Sigmoid colon (tissue), 7 donors: ENCODE measurements at regions of chr3 and their contacts with region 1.

Region 1: DNA sequence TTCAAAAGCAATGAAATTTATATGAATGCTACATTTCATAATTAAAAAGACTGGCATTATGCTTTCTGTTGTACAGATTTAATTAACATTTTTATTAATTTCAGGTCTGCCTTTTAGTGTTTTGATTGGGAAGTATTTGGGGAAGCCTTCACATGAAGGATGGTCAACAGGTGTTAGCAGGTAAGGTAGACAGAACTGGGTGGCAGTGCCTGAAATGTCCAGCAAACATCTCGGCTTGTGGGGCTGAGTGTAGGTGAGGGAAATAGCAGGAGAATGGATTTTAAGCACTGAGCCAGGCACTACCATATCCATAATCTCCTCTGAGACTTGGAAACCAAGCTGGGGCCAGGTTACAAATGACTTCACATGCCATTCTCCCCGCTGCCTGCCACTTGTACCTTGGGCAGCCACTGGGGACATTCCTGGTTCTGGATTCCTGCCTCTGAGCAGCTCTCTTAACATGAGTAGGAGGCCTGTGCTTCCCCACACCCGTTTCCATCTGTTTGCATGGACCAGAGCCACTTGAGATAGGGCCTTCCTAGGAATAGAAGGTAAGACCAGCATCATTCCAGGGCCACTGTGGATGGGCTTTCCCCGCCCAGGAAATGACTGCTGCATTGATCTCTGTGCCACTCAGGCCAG is 125.9 kb upstream of the HES1 start:
- DNase-seq: no peak
- H3K4me3 ChIP-seq: no peak overlapping the region
- H3K27ac ChIP-seq: no peak overlapping the region
- H3K4me1 ChIP-seq: no peaks in the 10 kb centered on the region
- H3K27me3 ChIP-seq: no peaks in the 10 kb centered on the region
- CTCF ChIP-seq: no peak
- EP300 ChIP-seq: no peak
- POLR2A ChIP-seq: no peak

Region 2: DNA sequence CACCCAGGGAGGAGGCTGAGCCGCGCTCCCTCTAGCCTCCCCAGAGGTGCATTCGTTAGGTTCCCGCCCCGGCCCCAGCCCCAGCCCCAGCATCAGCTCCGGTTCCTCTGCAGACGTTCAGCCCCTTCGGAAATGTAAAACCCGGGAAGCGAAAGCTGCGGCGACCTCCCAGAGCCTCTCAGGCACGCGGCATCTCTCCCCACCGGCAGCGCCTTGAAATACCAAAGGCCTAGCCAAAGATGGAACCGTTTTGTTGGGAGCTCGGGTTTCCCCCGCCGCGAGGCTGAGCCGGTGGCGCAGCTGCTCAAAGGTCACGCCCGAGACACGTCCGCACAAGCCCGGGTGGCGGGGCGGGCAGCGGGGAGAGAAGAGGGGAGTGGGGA is 48.2 kb after region 1 on chr3:
- intact Hi-C with region 1: loop called (anchors 5 kb)
- DNase-seq: peak; percentile 76
- H3K4me3 ChIP-seq: peak overlapping the region; percentile 23 to 45 (median 42)
- H3K27ac ChIP-seq: peak overlapping the region in 3 of 4 donors; percentile 20 to 36 (median 28)
- H3K4me1 ChIP-seq: peaks cover 0 to 9% (median 6%) of the 10 kb centered on the region in 4 donors
- H3K27me3 ChIP-seq: no peaks in the 10 kb centered on the region
- CTCF ChIP-seq: no peak
- EP300 ChIP-seq: no peak
- POLR2A ChIP-seq: no peak